ENCODE measurements at regions of chr11 and their contacts with region 1.

Region 1: DNA sequence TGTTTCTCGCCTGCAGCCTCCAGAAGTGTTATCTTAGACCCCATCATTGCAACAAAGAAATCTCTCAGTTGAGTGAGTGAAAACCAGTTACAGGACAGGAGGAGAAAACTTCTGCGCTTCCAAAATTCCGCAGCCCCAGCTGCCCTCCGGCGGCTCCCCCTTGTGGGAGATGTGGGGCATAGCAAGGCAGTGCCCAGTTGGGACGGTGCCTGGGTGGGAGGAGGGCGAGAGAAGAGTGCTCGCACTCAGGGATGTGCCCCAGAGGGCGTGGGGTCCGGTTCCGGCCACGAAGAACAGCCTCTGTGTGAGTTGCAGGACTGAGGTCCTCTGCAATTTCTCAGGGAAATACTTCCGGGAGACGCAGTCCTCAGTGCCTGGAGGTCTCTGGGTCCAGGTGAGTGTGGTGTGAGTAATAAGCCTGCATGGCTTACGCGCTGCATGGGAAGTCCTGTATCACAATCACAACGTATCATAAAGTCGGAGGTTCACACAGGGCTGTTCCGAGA is 87.0 kb upstream of the BLID start:
- DNase-seq: peak; percentile 93
- H3K4me3 ChIP-seq: peak overlapping the region; percentile 47 to 62 (median 59)
- H3K27ac ChIP-seq: peak overlapping the region; percentile 77
- H3K4me1 ChIP-seq: peaks cover 32% of the 10 kb centered on the region
- H3K27me3 ChIP-seq: no peaks in the 10 kb centered on the region
- CTCF ChIP-seq: peak; percentile 98 to 100

Region 2: DNA sequence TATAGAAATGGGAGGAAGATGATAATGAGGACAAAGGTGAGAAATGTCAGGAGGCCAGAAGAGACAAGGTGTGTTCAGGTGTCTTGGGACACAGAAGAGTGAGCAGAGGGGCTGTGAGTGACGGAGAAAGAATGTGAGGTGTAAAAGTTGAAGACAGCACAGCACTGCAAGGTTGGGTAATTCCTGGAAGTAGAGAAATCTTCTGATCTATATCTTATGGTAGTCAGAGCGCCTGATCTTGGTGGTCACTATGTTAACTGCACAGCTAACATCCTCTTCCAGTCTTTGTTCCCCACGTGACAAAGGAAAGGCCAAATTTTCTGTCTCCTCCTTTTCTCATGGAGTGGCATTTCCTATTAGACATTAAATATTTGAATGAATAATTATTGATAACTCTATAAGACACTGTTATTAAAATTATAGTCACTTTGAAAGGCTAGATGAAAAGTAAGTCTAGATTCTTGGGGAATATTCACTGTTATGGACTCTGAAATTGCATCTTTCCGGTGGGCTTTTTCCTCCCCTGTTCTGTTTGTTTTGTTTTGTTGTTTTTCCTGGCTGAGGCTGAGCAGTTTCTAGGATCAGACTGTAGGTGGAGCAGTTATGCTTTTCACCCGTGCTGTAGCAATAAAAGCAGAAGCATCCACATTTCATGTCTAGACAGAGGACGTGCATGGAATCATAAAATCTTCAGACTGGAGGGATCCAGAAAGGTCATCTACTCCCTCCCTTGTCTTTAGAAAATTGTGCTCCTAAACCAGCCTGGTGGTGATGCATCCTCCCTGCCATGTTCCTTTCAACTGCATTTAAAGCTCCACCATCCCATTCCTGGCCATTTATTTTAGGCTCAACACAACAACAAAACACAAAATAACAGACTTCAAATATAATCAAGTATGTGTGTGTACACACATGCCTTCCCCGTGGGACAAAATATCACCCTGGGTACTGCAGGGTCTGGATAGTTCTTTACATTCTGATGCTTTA is 883.9 kb before region 1 on chr11:
- CTCF ChIA-PET with region 1: no interaction called
- dilution Hi-C with region 1: no loop called
- in situ Hi-C with region 1: no loop called
- intact Hi-C with region 1: loop called (anchors 2 kb)
- DNase-seq: peak; percentile 49
- H3K4me3 ChIP-seq: no peak overlapping the region
- H3K27ac ChIP-seq: no peak overlapping the region
- H3K4me1 ChIP-seq: peaks cover 4% of the 10 kb centered on the region
- H3K27me3 ChIP-seq: no peaks in the 10 kb centered on the region
- CTCF ChIP-seq: peak; percentile 79 to 89

Region 3: DNA sequence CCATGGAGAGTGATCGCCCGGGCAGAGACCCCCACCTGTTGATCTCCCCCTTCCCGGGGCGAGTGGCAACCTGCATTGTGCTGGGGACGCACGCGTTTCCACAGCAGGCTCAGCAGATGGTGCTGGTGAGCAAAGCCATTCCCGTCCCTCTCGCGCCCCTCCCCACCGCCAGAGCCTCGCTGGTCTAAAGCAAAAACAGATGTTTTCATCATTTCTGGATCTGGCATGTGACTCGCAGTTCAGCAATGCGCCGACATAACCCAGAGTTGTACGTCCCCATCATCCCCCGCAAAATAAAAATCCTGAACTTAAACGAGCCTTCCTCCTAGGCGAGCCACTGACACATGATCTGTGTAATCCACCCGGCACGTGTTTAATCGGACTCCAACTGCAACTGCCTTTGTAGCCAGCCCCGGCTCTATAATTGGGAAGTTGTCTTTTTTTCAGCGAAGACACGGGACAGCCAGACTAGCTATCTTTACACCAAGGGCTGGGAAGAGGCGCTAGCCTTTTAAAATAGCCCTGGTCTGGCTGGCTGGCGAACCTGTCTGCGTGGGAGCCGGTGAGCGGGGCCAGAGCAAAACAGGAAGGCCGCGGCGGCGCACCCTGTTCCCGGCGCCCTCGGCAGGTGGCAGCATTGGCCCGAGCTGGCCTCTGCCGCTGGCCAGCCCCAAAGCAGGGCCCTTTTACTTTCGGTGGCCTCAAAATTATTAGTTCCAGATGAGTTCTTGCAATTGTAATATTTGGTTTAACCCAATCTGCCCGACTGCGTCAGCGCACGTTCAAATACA is 547.3 kb before region 1 on chr11:
- CTCF ChIA-PET with region 1: no interaction called
- dilution Hi-C with region 1: no loop called
- in situ Hi-C with region 1: loop called in 1 of 2 experiments (anchors 10 kb)
- intact Hi-C with region 1: loop called (anchors 1 kb)
- DNase-seq: peak; percentile 73
- H3K4me3 ChIP-seq: peak overlapping the region; percentile 45 to 59 (median 56)
- H3K27ac ChIP-seq: peak overlapping the region; percentile 58
- H3K4me1 ChIP-seq: peaks cover 20% of the 10 kb centered on the region
- H3K27me3 ChIP-seq: no peaks in the 10 kb centered on the region
- CTCF ChIP-seq: peak; percentile 77 to 97

Region 4: GRCh38 chr11:121870206-121871045 is 332.6 kb before region 1 on chr11:
- CTCF ChIA-PET with region 1: no interaction called
- dilution Hi-C with region 1: no loop called
- in situ Hi-C with region 1: no loop called
- intact Hi-C with region 1: loop called (anchors 2 kb)
- DNase-seq: no peak
- H3K4me3 ChIP-seq: no peak overlapping the region
- H3K27ac ChIP-seq: no peak overlapping the region
- H3K4me1 ChIP-seq: no peaks in the 10 kb centered on the region
- H3K27me3 ChIP-seq: peaks cover 5% of the 10 kb centered on the region
- CTCF ChIP-seq: peak in 1 of 2 donors; percentile 29

Region 5: GRCh38 chr11:122115524-122116379 is 87.3 kb before region 1 on chr11 and contains the start of gene BLID:
- CTCF ChIA-PET with region 1: interaction called, 3 read pairs
- dilution Hi-C with region 1: no loop called
- in situ Hi-C with region 1: loop called (anchors 10 kb)
- intact Hi-C with region 1: no loop called
- DNase-seq: no peak
- H3K4me3 ChIP-seq: no peak within 1 kb of the TSS
- H3K27ac ChIP-seq: no peak within 1 kb of the TSS
- H3K4me1 ChIP-seq: no peaks in the 10 kb centered on the region
- H3K27me3 ChIP-seq: no peaks in the 10 kb centered on the region
- CTCF ChIP-seq: peak; percentile 79 to 81
- total RNA-seq, gene BLID: 5.2 to 5.6 TPM

Region 6: GRCh38 chr11:122159173-122159721 is 43.8 kb before region 1 on chr11:
- CTCF ChIA-PET with region 1: no interaction called
- dilution Hi-C with region 1: no loop called
- in situ Hi-C with region 1: no loop called
- intact Hi-C with region 1: loop called (anchors 1 kb)
- DNase-seq: peak; percentile 52
- H3K4me3 ChIP-seq: peak overlapping the region; percentile 25 to 65 (median 37)
- H3K27ac ChIP-seq: peak overlapping the region; percentile 95
- H3K4me1 ChIP-seq: peaks cover 69% of the 10 kb centered on the region
- H3K27me3 ChIP-seq: no peaks in the 10 kb centered on the region
- CTCF ChIP-seq: no peak

Region 7: DNA sequence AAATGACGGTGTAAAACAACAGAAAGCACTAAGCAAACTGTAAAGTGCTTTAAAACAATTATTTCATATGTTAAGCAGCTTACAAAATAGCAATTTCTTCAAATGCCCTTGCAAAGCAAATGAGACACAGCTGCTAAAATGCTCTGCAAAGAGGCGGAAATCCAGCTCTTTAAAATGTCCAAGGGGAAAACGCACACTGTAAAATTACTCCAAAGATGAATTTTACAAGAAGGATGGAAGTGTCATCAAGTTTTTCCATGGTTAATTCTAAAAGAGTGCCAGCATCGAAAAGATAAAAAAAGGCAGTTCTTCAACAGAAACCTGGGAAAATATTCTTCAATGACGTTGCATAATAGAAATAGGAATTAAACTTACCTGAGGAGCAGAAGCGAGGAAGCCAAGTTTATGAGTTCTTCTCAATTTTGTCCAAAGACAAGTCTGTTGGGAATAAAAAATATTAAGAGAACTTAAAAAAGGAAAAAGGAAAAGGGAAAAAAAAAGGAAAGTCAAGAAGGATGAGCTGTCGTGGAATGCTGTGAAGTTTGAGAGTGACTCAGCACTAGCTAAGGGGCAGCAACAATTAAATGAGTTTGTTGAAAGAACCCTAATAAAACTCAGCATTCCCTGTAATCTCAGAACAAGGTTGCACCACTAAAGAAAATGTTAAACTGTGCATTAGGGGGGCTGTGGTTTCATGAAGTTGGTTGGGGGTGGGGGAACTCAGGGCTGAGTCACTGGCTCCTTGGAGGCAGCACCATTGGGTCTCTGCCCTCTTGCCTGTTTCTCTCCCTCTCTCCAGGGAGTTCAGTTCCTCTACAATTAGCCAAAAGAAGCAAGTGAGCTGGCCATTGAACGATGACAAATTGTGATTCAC is 22.8 kb before region 1 on chr11:
- CTCF ChIA-PET with region 1: no interaction called
- dilution Hi-C with region 1: no loop called
- in situ Hi-C with region 1: no loop called
- intact Hi-C with region 1: loop called (anchors 1 kb)
- DNase-seq: peak; percentile 95
- H3K4me3 ChIP-seq: peak overlapping the region; percentile 45 to 98 (median 95)
- H3K27ac ChIP-seq: peak overlapping the region; percentile 98
- H3K4me1 ChIP-seq: peaks cover 45% of the 10 kb centered on the region
- H3K27me3 ChIP-seq: no peaks in the 10 kb centered on the region
- CTCF ChIP-seq: no peak

Region 8: GRCh38 chr11:122192634-122193255 is 10.3 kb before region 1 on chr11:
- CTCF ChIA-PET with region 1: no interaction called
- dilution Hi-C with region 1: no loop called
- in situ Hi-C with region 1: no loop called
- intact Hi-C with region 1: no loop called
- DNase-seq: peak; percentile 62
- H3K4me3 ChIP-seq: no peak overlapping the region
- H3K27ac ChIP-seq: peak overlapping the region; percentile 60
- H3K4me1 ChIP-seq: peaks cover 75% of the 10 kb centered on the region
- H3K27me3 ChIP-seq: no peaks in the 10 kb centered on the region
- CTCF ChIP-seq: no peak